Activated naive CD4-positive, alpha-beta T cell treated with anti-CD3 and anti-CD28 coated beads for 36 hours (primary cell): ENCODE measurements at regions of chr1 and their contacts with region 1.

Region 1: GRCh38 chr1:31745096-31745945 is 18.8 kb downstream of the ADGRB2 start:
- DNase-seq: peak; percentile 71
- H3K4me3 Mint-ChIP-seq: no peak overlapping the region
- H3K27ac Mint-ChIP-seq: no peak overlapping the region
- H3K4me1 Mint-ChIP-seq: no peaks in the 10 kb centered on the region
- H3K27me3 Mint-ChIP-seq: no peaks in the 10 kb centered on the region

Region 2: GRCh38 chr1:31663622-31664452 is 81.5 kb before region 1 on chr1:
- CTCF ChIA-PET with region 1: interaction called, 14 read pairs
- intact Hi-C with region 1: loop called (anchors 2 kb)
- DNase-seq: peak; percentile 63
- H3K4me3 Mint-ChIP-seq: no peak overlapping the region
- H3K27ac Mint-ChIP-seq: no peak overlapping the region
- H3K4me1 Mint-ChIP-seq: no peaks in the 10 kb centered on the region
- H3K27me3 Mint-ChIP-seq: no peaks in the 10 kb centered on the region

Region 3: DNA sequence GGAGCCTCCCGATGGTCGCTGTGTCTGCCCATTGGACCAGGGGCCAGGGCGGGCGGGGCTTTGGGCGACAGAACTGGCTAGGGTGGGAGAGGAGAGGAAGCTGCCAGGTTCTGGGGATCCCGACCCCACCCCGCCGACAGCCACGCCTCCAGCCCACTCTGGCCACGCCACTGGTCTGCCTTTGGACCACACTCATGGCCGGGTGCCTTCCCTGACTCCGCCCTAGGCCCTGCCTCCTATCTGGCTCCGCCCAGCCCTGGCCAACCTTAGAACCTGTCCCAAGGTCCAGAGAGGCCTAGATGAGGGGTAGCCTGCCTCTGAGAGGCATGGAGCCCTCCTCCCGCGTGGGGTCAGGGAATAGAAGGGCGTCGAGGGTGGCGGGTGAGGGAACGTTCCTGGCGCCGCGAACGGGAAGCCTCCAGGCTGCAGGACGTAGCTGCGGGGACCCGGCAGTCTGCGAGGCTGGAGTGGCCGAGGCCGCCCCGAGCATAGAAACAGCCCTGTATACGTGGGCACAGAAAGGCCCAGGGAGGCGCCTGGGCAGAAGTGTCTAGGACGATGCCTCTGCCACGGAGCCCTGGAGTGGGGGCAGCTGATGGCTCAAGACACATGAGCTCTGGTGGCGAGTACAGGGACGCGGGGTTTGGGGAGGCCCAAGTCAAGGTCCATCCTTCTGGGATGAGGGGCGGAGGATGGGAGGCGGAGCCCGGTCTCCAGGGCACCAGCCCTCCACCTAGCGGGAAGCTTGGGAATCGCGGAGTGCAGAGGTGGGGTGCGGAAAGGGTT is 30.0 kb before region 1 on chr1:
- CTCF ChIA-PET with region 1: interaction called, 7 read pairs
- intact Hi-C with region 1: loop called (anchors 1 kb)
- DNase-seq: peak; percentile 60
- H3K4me3 Mint-ChIP-seq: peak overlapping the region; percentile 42
- H3K27ac Mint-ChIP-seq: no peak overlapping the region
- H3K4me1 Mint-ChIP-seq: peaks cover 8% of the 10 kb centered on the region
- H3K27me3 Mint-ChIP-seq: peaks cover 39% of the 10 kb centered on the region

Region 4: DNA sequence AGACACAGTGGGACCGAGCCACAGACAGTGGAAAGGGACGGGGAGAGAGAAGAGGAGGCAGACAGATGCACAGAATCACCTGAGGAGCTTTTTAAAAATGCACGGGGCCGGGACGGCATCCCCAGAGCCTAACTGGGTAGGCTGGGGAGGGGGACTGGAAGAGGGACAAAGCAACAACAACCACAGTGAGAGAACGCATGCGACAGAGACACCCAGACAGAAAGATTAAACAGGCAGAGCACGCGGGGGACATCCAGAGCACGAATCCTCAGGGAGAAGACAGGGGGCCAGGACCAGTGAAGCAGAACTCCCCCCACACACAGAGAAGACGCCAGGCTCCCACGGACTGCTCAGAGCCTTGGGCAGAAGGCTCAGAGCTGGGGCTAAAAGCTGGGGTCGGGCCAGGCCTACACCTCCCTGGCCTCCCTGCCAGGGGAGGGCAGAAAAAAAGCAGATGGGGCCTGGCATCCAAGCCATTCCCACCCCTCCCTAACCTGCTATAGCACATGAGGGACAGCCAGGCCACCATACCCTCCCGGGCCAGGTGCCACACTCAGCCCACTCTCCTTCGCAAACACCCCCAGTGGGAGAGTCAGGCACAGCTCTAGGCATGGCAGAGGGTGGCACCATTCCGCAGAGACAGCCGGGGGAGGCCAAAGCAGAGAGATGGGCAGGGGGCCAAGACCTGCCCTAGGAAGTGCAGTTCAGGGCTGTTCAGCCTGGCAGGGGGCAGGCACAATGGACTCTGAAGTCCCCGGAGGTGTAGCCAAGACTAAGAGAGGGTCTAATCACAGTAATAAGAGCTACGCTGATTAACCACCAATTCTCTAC is 11.7 kb before region 1 on chr1:
- CTCF ChIA-PET with region 1: no interaction called
- intact Hi-C with region 1: no loop called
- DNase-seq: no peak
- H3K4me3 Mint-ChIP-seq: no peak overlapping the region
- H3K27ac Mint-ChIP-seq: no peak overlapping the region
- H3K4me1 Mint-ChIP-seq: peaks cover 4% of the 10 kb centered on the region
- H3K27me3 Mint-ChIP-seq: no peaks in the 10 kb centered on the region

Region 5: DNA sequence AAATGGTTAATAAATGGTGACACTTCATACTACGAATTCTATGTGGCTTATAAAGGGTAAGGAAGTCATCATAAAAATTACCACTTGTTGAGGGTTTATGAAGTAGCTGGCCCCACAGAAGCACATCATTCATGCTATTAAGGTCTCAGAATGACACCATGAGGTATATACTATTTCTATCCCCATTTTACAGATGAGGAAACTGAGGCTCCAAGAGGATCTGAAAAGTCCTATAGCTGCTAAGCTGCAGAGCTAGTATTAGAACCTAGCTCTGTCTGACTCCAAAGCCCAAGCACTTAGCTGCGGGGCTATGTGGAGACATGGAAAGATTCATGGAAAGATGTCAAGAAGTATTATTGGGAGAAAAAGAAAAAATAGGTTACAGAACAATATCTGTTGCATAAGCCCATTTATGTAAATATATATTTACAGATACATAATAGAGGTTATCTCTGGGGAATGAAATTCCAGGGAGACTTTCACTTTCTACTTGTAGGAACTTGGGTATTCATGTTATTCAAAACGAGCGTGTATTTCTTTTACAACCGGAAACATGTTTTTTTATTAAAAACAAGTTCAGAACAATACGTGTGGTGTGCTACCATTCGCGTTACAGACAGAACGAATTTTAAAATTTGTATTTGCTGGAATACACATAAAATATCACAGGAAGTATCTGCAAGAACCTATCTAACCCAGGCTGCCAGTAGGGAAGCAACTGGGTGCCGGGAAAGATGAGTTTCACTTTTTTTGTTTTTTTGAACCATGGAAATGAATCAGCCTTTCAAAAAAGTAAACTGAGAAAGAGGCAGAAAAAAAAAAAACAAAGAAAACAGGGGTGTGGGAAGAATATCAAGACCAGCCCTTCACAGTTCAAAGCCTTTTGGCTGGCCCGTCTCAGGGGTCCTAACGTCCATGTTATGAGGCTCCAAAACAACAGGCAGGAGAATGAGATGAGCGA is 57.1 kb after region 1 on chr1:
- CTCF ChIA-PET with region 1: no interaction called
- intact Hi-C with region 1: no loop called
- DNase-seq: no peak
- H3K4me3 Mint-ChIP-seq: peak overlapping the region; percentile 18
- H3K27ac Mint-ChIP-seq: no peak overlapping the region
- H3K4me1 Mint-ChIP-seq: peaks cover 14% of the 10 kb centered on the region
- H3K27me3 Mint-ChIP-seq: no peaks in the 10 kb centered on the region